GM12878 (cell line): ENCODE measurements at regions of chr20 and their contacts with region 1.

Region 1: GRCh38 chr20:45362804-45363610 is at the start of gene SYS1:
- DNase-seq: peak; percentile 94
- ATAC-seq: peak; percentile 85
- H3K4me3 ChIP-seq: peak within 1 kb of the TSS; percentile 62
- H3K27ac ChIP-seq: peak within 1 kb of the TSS; percentile 92
- H3K4me1 ChIP-seq: peaks cover 39% of the 10 kb centered on the region
- H3K27me3 ChIP-seq: no peaks in the 10 kb centered on the region
- CTCF ChIP-seq: peak; percentile 85 to 99 (median 87); a peak in 5 of 6 replicates
- EP300 ChIP-seq: 0 out of 4 replicates have a peak, but pooled peaks of 1 of the 2 experiments have one; percentile 30
- POLR2A ChIP-seq: peak; percentile 94
- RAD21 ChIP-seq: peak; percentile 91
- polyA plus RNA-seq, gene SYS1: 5.1 to 7.3 TPM

Region 2: DNA sequence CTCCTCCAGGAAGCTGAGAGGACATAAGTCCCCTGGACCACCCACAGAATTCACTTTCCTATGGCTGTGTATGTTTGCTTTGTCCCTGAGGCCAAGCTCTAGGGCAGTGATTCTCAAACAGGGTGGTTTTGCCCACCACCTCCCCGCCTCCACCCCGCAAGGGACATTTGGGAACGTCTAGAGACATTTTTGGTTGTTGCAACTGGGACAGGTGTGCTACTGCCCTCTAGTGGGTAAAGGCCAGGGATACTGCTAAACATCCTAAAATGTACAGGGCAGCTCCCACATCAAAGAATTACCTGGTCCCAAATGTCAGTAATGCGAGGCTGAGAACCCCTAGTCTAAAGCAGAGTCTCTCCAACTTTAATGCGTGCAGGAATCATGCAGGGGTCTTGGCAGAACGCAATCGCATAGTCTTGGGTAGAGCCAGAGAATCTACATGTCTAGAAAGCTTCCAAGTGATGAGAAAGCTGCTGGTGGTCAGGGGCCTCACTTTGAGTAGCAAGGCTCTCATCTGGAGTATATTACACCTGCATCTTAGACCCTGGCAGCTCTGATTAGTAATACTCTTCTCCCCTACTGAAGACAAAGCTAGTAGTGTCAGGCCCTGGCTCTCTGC is 267.1 kb before region 1 on chr20:
- CTCF ChIA-PET with region 1: no interaction called
- POLR2A ChIA-PET with region 1: no interaction called
- RAD21 ChIA-PET with region 1: no interaction called
- SMC1A ChIA-PET with region 1: no interaction called
- in situ Hi-C with region 1: no loop called
- intact Hi-C with region 1: no loop called
- DNase-seq: peak; percentile 27
- ATAC-seq: peak; percentile 82
- H3K4me3 ChIP-seq: no peak overlapping the region
- H3K27ac ChIP-seq: no peak overlapping the region
- H3K4me1 ChIP-seq: no peaks in the 10 kb centered on the region
- H3K27me3 ChIP-seq: peaks cover under 1 to 7% of the 10 kb centered on the region in 2 experiments; a peak in 3 of 4 replicates
- CTCF ChIP-seq: peak; percentile 69 to 86 (median 84)
- EP300 ChIP-seq: no peak
- POLR2A ChIP-seq: no peak
- RAD21 ChIP-seq: peak; percentile 86

Region 3: DNA sequence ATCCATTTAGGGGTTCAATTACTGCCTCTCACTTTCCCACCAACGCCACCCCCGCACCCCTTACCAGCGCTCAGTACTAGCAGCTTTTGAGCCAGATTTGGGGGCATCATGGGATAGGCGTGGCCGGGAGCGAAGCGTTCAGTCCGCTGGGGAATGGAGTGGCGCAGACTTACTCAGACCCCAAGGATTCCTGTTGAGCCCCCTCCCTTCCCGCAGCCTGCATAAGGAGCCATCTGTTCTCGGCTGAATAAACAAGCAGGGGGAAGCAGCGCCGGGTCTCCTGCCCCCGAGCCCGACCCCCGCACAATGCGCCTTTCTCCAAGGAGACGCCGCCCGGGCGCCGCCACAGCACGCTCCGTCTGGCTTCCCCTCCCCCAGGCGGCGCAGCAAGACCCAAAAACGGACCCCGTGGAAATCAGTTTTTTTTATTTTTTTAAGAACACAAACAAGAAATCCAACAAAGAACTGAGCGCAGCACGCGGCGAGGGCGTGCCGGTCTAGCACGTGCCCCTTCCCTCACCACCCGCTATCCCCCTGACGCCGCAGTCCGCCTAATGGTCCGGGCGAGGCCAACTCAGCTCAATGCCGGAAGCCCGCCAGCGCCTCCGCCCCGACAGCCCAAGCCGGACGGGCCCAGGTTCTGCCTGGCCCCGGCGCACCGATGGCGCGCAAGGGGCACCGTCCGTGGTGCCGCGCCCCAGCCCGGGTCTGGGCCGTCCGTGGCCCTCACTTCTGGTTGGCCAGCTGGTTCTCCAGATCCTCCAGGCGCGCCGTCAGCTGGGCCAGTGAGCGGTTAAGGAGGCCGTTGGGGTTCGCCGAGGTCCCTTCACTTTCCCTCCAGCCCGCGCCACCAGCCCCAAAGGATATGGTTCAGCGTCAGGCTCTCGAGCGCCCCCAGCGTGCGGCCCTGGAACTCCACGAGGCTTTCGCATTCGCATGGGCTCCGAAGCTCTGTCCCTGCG is 69.7 kb before region 1 on chr20:
- CTCF ChIA-PET with region 1: interaction called, 12 read pairs
- POLR2A ChIA-PET with region 1: no interaction called
- RAD21 ChIA-PET with region 1: no interaction called
- SMC1A ChIA-PET with region 1: no interaction called
- in situ Hi-C with region 1: no loop called
- intact Hi-C with region 1: no loop called
- DNase-seq: no peak
- ATAC-seq: peak; percentile 93
- H3K4me3 ChIP-seq: peak overlapping the region; percentile 30; the same call in 1 of the 2 replicates
- H3K27ac ChIP-seq: no peak overlapping the region
- H3K4me1 ChIP-seq: no peaks in the 10 kb centered on the region
- H3K27me3 ChIP-seq: peaks cover 6 to 7% of the 10 kb centered on the region in 2 experiments; a peak in 3 of 4 replicates
- CTCF ChIP-seq: peak; percentile 83 to 96 (median 89)
- EP300 ChIP-seq: no peak
- POLR2A ChIP-seq: no peak
- RAD21 ChIP-seq: peak; percentile 25; the same call in 1 of the 2 replicates

Region 4: GRCh38 chr20:45347936-45348778 is 14.8 kb before region 1 on chr20 and contains the start of gene SDC4:
- CTCF ChIA-PET with region 1: interaction called, 11 read pairs
- POLR2A ChIA-PET with region 1: interaction called, 8 read pairs
- RAD21 ChIA-PET with region 1: interaction called, 5 read pairs
- SMC1A ChIA-PET with region 1: interaction called, 9 read pairs
- in situ Hi-C with region 1: no loop called
- intact Hi-C with region 1: no loop called
- DNase-seq: no peak
- ATAC-seq: peak; percentile 84
- H3K4me3 ChIP-seq: peak within 1 kb of the TSS; percentile 49; the same call in 1 of the 2 replicates
- H3K27ac ChIP-seq: no peak within 1 kb of the TSS
- H3K4me1 ChIP-seq: peaks cover 6% of the 10 kb centered on the region
- H3K27me3 ChIP-seq: 0 out of 4 replicates have a peak, but pooled peaks cover 0 to 6% of the 10 kb centered on the region in 2 experiments
- CTCF ChIP-seq: no peak
- EP300 ChIP-seq: no peak
- POLR2A ChIP-seq: peak; percentile 79
- RAD21 ChIP-seq: no peak
- polyA plus RNA-seq, gene SDC4: 0.52 to 0.66 TPM

Region 5: DNA sequence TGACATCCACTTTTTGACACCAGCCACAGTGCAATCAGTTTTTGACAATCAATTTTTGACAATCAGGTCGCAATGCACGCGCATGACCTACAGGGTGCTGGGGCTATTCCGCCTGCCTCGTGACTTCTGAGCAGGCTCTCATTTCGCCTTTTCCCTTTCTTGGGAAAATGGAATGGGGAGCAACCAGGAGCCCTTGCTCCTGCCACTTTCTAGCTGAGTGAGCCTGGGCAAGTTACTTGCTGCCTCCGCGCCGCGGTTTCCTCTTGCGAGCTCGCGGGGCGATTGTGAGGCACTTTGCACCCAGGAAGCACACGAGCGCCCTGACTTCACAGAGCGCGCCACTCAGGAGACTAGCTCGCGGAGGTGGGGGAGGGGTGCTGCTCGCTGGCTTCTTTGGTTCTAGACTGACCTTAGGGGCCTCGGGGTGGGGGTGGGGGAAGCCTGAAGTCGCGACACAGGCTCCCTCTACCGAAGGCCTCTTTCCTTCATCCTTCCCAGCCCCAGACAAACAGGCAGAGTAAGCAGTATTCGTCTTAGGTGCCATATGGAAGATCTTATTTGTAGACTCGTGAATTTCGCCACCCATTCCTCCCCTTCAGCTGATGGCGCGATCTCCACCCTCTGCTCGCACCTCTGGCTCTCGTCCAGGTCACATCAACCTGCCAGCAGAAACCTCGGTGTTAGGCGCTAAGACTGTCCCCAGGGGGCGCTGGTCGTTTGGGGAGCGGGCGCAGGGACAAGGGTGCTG is 10.5 kb after region 1 on chr20:
- CTCF ChIA-PET with region 1: interaction called, 105 read pairs
- POLR2A ChIA-PET with region 1: interaction called, 4 read pairs
- RAD21 ChIA-PET with region 1: interaction called, 31 read pairs
- SMC1A ChIA-PET with region 1: interaction called, 56 read pairs
- in situ Hi-C with region 1: no loop called
- intact Hi-C with region 1: no loop called
- DNase-seq: no peak
- ATAC-seq: peak; percentile 98
- H3K4me3 ChIP-seq: peak overlapping the region; percentile 59; the same call in 1 of the 2 replicates
- H3K27ac ChIP-seq: no peak overlapping the region
- H3K4me1 ChIP-seq: peaks cover 15% of the 10 kb centered on the region
- H3K27me3 ChIP-seq: no peaks in the 10 kb centered on the region
- CTCF ChIP-seq: peak; percentile 82 to 90 (median 89)
- EP300 ChIP-seq: no peak
- POLR2A ChIP-seq: no peak
- RAD21 ChIP-seq: peak; percentile 88

Region 6: GRCh38 chr20:45415774-45416637 is 53.0 kb after region 1 on chr20 and contains the start of gene PIGT:
- CTCF ChIA-PET with region 1: interaction called, 22 read pairs
- POLR2A ChIA-PET with region 1: interaction called, 9 read pairs
- RAD21 ChIA-PET with region 1: interaction called, 24 read pairs
- SMC1A ChIA-PET with region 1: interaction called, 21 read pairs
- in situ Hi-C with region 1: loop called (anchors 5 kb)
- intact Hi-C with region 1: loop called (anchors 2 kb)
- DNase-seq: peak; percentile 51
- ATAC-seq: peak; percentile 83
- H3K4me3 ChIP-seq: peak within 1 kb of the TSS; percentile 97
- H3K27ac ChIP-seq: peak within 1 kb of the TSS; percentile 82
- H3K4me1 ChIP-seq: peaks cover 20% of the 10 kb centered on the region
- H3K27me3 ChIP-seq: no peaks in the 10 kb centered on the region
- CTCF ChIP-seq: no peak
- EP300 ChIP-seq: no peak
- POLR2A ChIP-seq: peak; percentile 99
- RAD21 ChIP-seq: no peak
- polyA plus RNA-seq, gene PIGT: 19.1 to 27.5 TPM

Region 7: DNA sequence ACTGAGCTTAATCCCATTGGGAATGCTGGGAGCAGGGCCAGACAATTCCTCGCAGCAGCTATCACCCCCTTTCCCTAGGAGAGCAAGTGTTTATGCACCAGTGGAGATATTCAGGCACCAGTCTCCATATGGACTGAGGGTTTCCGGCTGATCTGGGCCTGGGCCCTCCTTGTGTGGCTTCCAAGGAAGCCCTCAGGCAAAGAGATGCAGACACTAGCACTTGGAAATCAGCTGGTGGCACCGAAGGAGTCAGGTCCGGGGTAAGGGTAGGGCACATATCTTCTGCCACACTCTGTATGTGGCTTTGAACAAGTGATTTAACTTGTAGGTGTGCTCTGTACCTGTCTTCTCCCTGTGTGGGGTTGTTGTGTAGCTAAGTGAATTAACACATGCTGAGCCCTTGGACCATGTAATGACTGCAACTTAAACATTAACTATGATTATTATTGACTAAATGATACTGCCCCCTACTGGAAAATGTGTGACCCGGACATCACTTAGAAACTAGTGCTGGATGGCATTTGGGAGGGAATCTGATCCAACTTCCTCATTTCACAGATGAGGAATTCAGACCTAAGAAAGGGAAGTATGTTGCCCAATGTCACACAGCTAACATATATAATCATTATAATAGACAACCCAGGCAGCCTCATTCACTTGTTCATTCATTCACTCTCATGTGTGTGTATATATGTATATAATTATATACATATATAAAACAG is 87.3 kb after region 1 on chr20:
- CTCF ChIA-PET with region 1: interaction called, 57 read pairs
- POLR2A ChIA-PET with region 1: interaction called, 4 read pairs
- RAD21 ChIA-PET with region 1: interaction called, 9 read pairs
- SMC1A ChIA-PET with region 1: interaction called, 20 read pairs
- in situ Hi-C with region 1: no loop called
- intact Hi-C with region 1: no loop called
- DNase-seq: no peak
- ATAC-seq: peak; percentile 74
- H3K4me3 ChIP-seq: no peak overlapping the region
- H3K27ac ChIP-seq: no peak overlapping the region
- H3K4me1 ChIP-seq: no peaks in the 10 kb centered on the region
- H3K27me3 ChIP-seq: no peaks in the 10 kb centered on the region; a peak in 3 of 4 replicates
- CTCF ChIP-seq: peak; percentile 46 to 61 (median 60)
- EP300 ChIP-seq: no peak
- POLR2A ChIP-seq: no peak
- RAD21 ChIP-seq: peak; percentile 58

Region 8: GRCh38 chr20:45998761-45999160 is 635.8 kb after region 1 on chr20:
- CTCF ChIA-PET with region 1: no interaction called
- POLR2A ChIA-PET with region 1: no interaction called
- RAD21 ChIA-PET with region 1: no interaction called
- SMC1A ChIA-PET with region 1: no interaction called
- in situ Hi-C with region 1: no loop called
- intact Hi-C with region 1: no loop called
- DNase-seq: no peak
- ATAC-seq: peak; percentile 82
- H3K4me3 ChIP-seq: no peak overlapping the region
- H3K27ac ChIP-seq: no peak overlapping the region
- H3K4me1 ChIP-seq: peaks cover 10% of the 10 kb centered on the region
- H3K27me3 ChIP-seq: no peaks in the 10 kb centered on the region; a peak in 1 of 4 replicates
- CTCF ChIP-seq: no peak
- EP300 ChIP-seq: no peak
- POLR2A ChIP-seq: no peak
- RAD21 ChIP-seq: no peak

Region 9: DNA sequence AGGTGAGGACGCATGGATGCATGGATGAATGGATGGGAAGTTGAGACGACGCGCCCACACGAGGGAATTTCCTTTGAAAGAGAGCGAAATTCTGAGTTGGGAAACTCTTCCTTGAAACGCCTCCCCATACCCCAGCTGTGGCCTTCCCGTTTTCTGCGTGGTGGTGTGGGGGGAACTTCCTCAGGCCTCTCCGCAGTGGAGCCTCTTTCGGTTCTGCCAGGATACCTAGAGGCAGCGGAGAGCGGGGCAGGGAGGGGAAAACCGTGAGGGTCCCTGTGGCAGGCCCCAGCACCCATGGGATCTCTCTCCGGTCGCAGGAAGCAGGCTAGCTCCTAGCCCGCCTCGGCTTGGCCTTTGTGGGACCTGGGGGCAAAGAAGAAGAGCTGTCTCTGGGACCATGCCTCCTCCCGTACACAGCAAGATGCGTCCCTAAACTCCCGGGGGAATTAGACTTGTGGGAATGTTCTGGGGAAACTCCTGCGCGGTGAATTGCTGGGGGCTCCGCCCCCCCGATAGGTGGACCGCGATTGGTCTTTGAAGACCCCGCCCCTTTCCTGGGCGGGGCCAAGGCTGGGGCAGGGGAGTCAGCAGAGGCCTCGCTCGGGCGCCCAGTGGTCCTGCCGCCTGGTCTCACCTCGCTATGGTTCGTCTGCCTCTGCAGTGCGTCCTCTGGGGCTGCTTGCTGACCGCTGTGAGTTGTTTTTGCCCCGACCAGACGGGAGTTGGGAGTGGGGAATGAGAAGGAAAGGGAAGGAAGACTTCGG is 754.9 kb after region 1 on chr20 and contains the start of gene CD40:
- CTCF ChIA-PET with region 1: no interaction called
- POLR2A ChIA-PET with region 1: no interaction called
- RAD21 ChIA-PET with region 1: no interaction called
- SMC1A ChIA-PET with region 1: no interaction called
- in situ Hi-C with region 1: loop called (anchors 10 kb)
- intact Hi-C with region 1: no loop called
- DNase-seq: peak; percentile 76
- ATAC-seq: peak; percentile 90
- H3K4me3 ChIP-seq: peak within 1 kb of the TSS; percentile 96
- H3K27ac ChIP-seq: peak within 1 kb of the TSS; percentile 76
- H3K4me1 ChIP-seq: peaks cover 6% of the 10 kb centered on the region
- H3K27me3 ChIP-seq: no peaks in the 10 kb centered on the region
- CTCF ChIP-seq: no peak
- EP300 ChIP-seq: 0 out of 4 replicates have a peak, but pooled peaks of 1 of the 2 experiments have one; percentile 26
- POLR2A ChIP-seq: peak; percentile 97
- RAD21 ChIP-seq: no peak
- polyA plus RNA-seq, gene CD40: 40.8 to 71.7 TPM